BJ (cell line): ENCODE measurements at regions of chr4 and their contacts with region 1.

Region 1: DNA sequence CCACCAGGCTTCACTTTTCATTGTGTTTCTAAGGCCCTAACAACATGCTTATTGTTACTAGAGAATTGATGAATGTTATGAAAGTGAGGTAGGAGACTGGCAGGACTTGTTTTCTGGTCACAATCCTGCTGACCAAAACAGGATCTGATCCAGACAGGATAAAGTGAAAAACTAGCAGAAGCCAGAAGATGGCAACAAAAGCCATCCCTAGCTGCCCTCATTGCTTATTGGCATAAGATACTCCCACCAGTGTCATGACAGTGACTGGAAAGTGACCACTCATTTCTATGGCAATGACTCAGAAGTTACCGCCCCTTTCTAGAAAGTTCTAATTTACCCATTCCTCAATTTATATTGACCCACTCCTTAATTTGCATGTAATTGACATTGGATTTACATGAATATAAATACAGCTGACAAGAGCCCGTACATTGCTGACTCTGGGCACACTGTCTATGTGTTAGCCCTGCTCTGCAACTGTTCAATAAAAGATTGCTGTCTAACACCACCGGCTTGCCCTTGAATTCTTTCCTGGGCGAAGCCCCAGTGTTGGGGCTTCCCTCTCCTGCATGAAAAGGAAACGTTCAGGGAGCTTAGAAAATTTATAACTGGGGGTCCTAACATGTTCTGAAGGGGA is 30.0 kb upstream of the FGG start:
- DNase-seq: no peak
- H3K4me3 ChIP-seq: no peak overlapping the region
- H3K27me3 ChIP-seq: no peaks in the 10 kb centered on the region
- CTCF ChIP-seq: no peak

Region 2: DNA sequence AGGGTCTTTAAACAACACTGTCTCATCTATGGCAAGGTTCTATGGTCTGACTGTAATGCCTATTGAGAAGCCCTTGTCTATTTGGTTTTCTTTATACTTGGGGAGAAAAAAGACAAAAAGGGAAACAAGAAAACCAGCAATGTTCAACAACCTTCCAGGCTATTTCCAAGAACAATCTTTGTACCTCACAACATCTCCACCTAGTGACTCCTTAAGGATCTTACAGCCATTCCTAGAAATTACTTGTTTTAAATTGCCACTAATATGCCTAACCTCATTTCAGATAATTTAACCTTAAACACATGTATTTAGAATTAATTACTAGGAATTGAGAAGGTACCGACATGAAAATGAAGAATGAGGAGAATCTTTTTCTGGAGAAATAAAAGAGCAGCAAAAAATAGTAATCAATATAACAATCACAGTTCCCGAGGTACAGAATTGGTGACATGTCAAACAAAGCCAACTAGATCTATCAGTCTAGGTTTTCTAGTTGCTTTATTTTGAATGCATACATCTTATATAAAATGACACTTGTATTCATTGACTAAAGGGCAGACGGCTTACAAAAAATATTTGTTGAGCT is 137.0 kb after region 1 on chr4:
- CTCF ChIA-PET with region 1: interaction called, 12 read pairs
- POLR2A ChIA-PET with region 1: no interaction called
- DNase-seq: no peak
- H3K4me3 ChIP-seq: no peak overlapping the region
- H3K27me3 ChIP-seq: no peaks in the 10 kb centered on the region
- CTCF ChIP-seq: peak; percentile 66